HepG2 (cell line): ENCODE measurements at regions of chr6 and their contacts with region 1.

Region 1: DNA sequence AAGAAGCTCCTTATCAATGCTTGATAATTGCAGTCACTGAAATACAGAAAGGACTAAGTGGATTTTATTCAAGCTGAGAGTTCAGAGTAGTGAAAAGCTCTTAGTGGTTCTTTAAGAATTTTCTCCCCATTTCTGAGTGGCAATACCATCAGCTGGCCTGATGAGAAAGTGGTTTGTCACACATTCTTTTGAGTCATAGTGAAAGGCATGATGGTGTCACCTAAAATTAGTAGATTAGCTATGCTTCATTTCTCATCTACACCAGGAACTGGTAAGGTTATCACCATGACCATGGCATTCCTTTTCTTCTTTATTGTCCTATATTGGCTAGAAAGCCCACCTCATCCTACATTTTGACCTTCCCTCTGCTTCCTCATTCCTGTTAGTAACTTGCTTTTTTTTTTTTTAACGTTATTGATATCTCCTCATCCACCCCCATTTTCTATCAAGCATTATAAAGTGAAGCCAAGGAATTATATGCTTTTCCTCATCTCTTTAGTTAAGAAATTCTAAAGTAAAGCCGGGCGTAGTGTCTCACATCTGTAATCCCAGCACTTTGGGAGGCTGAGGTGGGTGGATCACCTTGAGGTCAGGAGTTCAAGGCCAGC is 67.4 kb upstream of the LOC128125822 start:
- DNase-seq: no peak
- ATAC-seq: no peak
- H3K4me3 ChIP-seq: no peak overlapping the region
- H3K27ac ChIP-seq: no peak overlapping the region
- H3K4me1 ChIP-seq: peaks cover 68% of the 10 kb centered on the region
- H3K27me3 ChIP-seq: no peaks in the 10 kb centered on the region
- CTCF ChIP-seq: no peak
- EP300 ChIP-seq: no peak
- POLR2A ChIP-seq: no peak
- RAD21 ChIP-seq: no peak

Region 2: GRCh38 chr6:63352587-63353285 is 152.1 kb before region 1 on chr6:
- CTCF ChIA-PET with region 1: no interaction called
- POLR2A ChIA-PET with region 1: no interaction called
- in situ Hi-C with region 1: loop called (anchors 10 kb)
- intact Hi-C with region 1: loop called (anchors 1 kb)
- DNase-seq: peak; percentile 80
- ATAC-seq: peak; percentile 97
- H3K4me3 ChIP-seq: no peak overlapping the region
- H3K27ac ChIP-seq: peak overlapping the region; percentile 49
- H3K4me1 ChIP-seq: peaks cover 49% of the 10 kb centered on the region
- H3K27me3 ChIP-seq: no peaks in the 10 kb centered on the region
- CTCF ChIP-seq: peak; percentile 97
- EP300 ChIP-seq: peak in 1 of 2 experiments; percentile 66; a peak in 2 of 4 replicates
- POLR2A ChIP-seq: no peak
- RAD21 ChIP-seq: peak; percentile 99

Region 3: GRCh38 chr6:63403725-63404124 is 101.2 kb before region 1 on chr6:
- CTCF ChIA-PET with region 1: no interaction called
- POLR2A ChIA-PET with region 1: no interaction called
- in situ Hi-C with region 1: no loop called
- intact Hi-C with region 1: loop called (anchors 5 kb)
- DNase-seq: no peak
- ATAC-seq: no peak
- H3K4me3 ChIP-seq: no peak overlapping the region
- H3K27ac ChIP-seq: no peak overlapping the region
- H3K4me1 ChIP-seq: peaks cover 26% of the 10 kb centered on the region
- H3K27me3 ChIP-seq: no peaks in the 10 kb centered on the region
- CTCF ChIP-seq: no peak
- EP300 ChIP-seq: no peak
- POLR2A ChIP-seq: no peak
- RAD21 ChIP-seq: no peak

Region 4: GRCh38 chr6:63476302-63476701 is 28.6 kb before region 1 on chr6:
- CTCF ChIA-PET with region 1: no interaction called
- POLR2A ChIA-PET with region 1: interaction called, 6 read pairs
- in situ Hi-C with region 1: no loop called
- intact Hi-C with region 1: loop called (anchors 5 kb)
- DNase-seq: peak; percentile 60
- ATAC-seq: peak; percentile 93
- H3K4me3 ChIP-seq: no peak overlapping the region
- H3K27ac ChIP-seq: peak overlapping the region; percentile 1
- H3K4me1 ChIP-seq: peaks cover 42% of the 10 kb centered on the region
- H3K27me3 ChIP-seq: no peaks in the 10 kb centered on the region
- CTCF ChIP-seq: peak; percentile 49
- EP300 ChIP-seq: no peak
- POLR2A ChIP-seq: no peak
- RAD21 ChIP-seq: peak; percentile 39; the same call in 1 of the 2 replicates

Region 5: DNA sequence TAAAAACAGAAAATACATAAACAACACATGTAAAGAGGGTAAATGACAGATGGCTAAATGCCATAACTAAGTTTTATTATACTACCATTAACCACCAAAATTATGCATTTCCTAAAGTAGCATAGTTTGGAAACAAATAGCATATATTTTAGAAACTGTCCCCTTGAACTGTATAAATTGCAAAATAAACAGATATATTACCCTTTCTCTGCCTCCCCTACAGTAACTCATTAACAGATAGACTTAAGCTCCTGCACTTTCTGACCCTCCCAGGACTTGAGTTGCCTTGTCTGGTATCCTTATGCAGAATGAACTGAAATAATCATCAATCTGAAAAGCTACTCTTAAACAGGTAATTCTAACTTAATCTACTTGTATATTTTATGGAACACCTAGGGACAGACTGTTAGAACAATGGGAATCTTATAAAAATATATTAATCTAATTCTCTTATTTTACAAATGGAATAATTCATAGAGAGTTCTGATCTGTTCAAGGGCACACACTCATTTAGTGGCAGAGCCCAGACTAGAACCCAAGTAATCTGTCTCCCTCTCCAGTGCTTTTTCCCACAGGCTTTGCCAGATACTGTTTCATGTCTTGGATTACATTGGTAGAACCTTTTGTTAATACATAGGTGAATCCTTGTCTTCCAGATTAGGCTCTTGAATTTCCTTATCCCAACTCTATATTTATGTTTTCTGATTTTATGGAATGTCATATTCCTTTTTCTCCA is 16.8 kb after region 1 on chr6:
- CTCF ChIA-PET with region 1: no interaction called
- POLR2A ChIA-PET with region 1: interaction called, 46 read pairs
- in situ Hi-C with region 1: no loop called
- intact Hi-C with region 1: no loop called
- DNase-seq: peak; percentile 76
- ATAC-seq: peak; percentile 82
- H3K4me3 ChIP-seq: peak overlapping the region; percentile 49 to 74 (median 68)
- H3K27ac ChIP-seq: peak overlapping the region; percentile 96
- H3K4me1 ChIP-seq: peaks cover 98% of the 10 kb centered on the region
- H3K27me3 ChIP-seq: no peaks in the 10 kb centered on the region
- CTCF ChIP-seq: no peak
- EP300 ChIP-seq: peak in 1 of 2 experiments; percentile 66; a peak in 2 of 4 replicates
- POLR2A ChIP-seq: peak; percentile 38 to 55; a peak in 2 of 4 replicates
- RAD21 ChIP-seq: no peak

Region 6: GRCh38 chr6:63565058-63565726 is 60.3 kb after region 1 on chr6:
- CTCF ChIA-PET with region 1: no interaction called
- POLR2A ChIA-PET with region 1: interaction called, 24 read pairs
- in situ Hi-C with region 1: no loop called
- intact Hi-C with region 1: no loop called
- DNase-seq: peak; percentile 98
- ATAC-seq: peak; percentile 83
- H3K4me3 ChIP-seq: peak overlapping the region; percentile 24 to 63 (median 42)
- H3K27ac ChIP-seq: peak overlapping the region; percentile 83
- H3K4me1 ChIP-seq: peaks cover 98% of the 10 kb centered on the region
- H3K27me3 ChIP-seq: no peaks in the 10 kb centered on the region
- CTCF ChIP-seq: no peak
- EP300 ChIP-seq: peak; percentile 76 to 95
- POLR2A ChIP-seq: peak in 1 of 2 experiments; percentile 43; a peak in 1 of 4 replicates
- RAD21 ChIP-seq: no peak

Region 7: GRCh38 chr6:63731930-63732329 is 227.0 kb after region 1 on chr6:
- CTCF ChIA-PET with region 1: no interaction called
- POLR2A ChIA-PET with region 1: no interaction called
- in situ Hi-C with region 1: no loop called
- intact Hi-C with region 1: no loop called
- DNase-seq: no peak
- ATAC-seq: no peak
- H3K4me3 ChIP-seq: no peak overlapping the region
- H3K27ac ChIP-seq: no peak overlapping the region
- H3K4me1 ChIP-seq: 0 out of 2 replicates have a peak, but pooled peaks cover 11% of the 10 kb centered on the region
- H3K27me3 ChIP-seq: no peaks in the 10 kb centered on the region
- CTCF ChIP-seq: no peak
- EP300 ChIP-seq: no peak
- POLR2A ChIP-seq: no peak
- RAD21 ChIP-seq: no peak